ENCODE measurements at regions of chr6 and their contacts with region 1.

Region 1: GRCh38 chr6:110352563-110353262 is 5.4 kb downstream of the METTL24 start:
- DNase-seq: peak in 1 of 3 donors; percentile 34
- H3K4me3 ChIP-seq: no peak overlapping the region
- H3K27ac ChIP-seq: no peak overlapping the region
- H3K4me1 ChIP-seq: peaks cover 0 to 13% (median 7%) of the 10 kb centered on the region in 4 experiments
- H3K27me3 ChIP-seq: peaks cover 0 to 3% (median 0%) of the 10 kb centered on the region in 5 experiments

Region 2: DNA sequence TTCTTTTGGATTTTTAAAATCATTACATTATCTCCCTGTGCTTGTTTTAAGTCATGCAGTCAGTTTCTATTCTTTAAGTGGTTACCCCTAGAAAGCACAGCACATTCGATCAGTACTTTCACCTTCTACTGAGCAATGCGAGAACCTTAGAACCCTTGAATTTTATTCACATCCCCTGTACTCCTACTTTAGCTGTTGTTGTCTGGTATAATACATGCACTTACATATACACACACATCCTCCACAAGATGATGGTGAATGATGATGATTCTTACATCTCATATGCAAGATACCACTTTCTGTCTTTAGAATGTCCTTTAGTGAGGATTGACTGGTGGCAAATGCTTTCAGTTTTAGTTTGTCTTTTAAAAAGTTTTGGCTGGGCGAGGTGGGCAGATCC is 166.8 kb before region 1 on chr6:
- CTCF ChIA-PET with region 1: no interaction called
- POLR2A ChIA-PET with region 1: no interaction called
- DNase-seq: no peak
- H3K4me3 ChIP-seq: no peak overlapping the region
- H3K27ac ChIP-seq: no peak overlapping the region
- H3K4me1 ChIP-seq: peaks cover 10 to 32% (median 24%) of the 10 kb centered on the region in 4 experiments
- H3K27me3 ChIP-seq: no peaks in the 10 kb centered on the region

Region 3: GRCh38 chr6:110366256-110366655 is 13.5 kb after region 1 on chr6:
- CTCF ChIA-PET with region 1: interaction called, 16 read pairs
- POLR2A ChIA-PET with region 1: no interaction called
- DNase-seq: peak in 1 of 3 donors; percentile 10
- H3K4me3 ChIP-seq: no peak overlapping the region
- H3K27ac ChIP-seq: no peak overlapping the region
- H3K4me1 ChIP-seq: peaks cover 0 to 3% (median 1%) of the 10 kb centered on the region in 4 experiments
- H3K27me3 ChIP-seq: no peaks in the 10 kb centered on the region